Activated CD4-positive, alpha-beta memory T cell treated with anti-CD3 and anti-CD28 coated beads, Interleukin-2, amount 10 ng/mL, durations not matched to agents 7 days and 5 days (primary cell): ENCODE measurements at regions of chr3 and their contacts with region 1.

Region 1: GRCh38 chr3:184017672-184018423 is at the start of gene ABCC5:
- DNase-seq: peak; percentile 85
- H3K4me3 Mint-ChIP-seq: peak within 1 kb of the TSS; percentile 99
- H3K27ac Mint-ChIP-seq: peak within 1 kb of the TSS; percentile 83
- H3K4me1 Mint-ChIP-seq: peaks cover 45% of the 10 kb centered on the region
- H3K27me3 Mint-ChIP-seq: peaks cover 15% of the 10 kb centered on the region
- total RNA-seq, gene ABCC5: 24.1 to 25.3 TPM

Region 2: GRCh38 chr3:183895296-183895695 is 122.6 kb before region 1 on chr3:
- CTCF ChIA-PET with region 1: interaction called, 17 read pairs
- POLR2A ChIA-PET with region 1: no interaction called
- DNase-seq: peak; percentile 40
- H3K4me3 Mint-ChIP-seq: no peak overlapping the region
- H3K27ac Mint-ChIP-seq: no peak overlapping the region
- H3K4me1 Mint-ChIP-seq: peaks cover 3% of the 10 kb centered on the region
- H3K27me3 Mint-ChIP-seq: peaks cover 12% of the 10 kb centered on the region

Region 3: DNA sequence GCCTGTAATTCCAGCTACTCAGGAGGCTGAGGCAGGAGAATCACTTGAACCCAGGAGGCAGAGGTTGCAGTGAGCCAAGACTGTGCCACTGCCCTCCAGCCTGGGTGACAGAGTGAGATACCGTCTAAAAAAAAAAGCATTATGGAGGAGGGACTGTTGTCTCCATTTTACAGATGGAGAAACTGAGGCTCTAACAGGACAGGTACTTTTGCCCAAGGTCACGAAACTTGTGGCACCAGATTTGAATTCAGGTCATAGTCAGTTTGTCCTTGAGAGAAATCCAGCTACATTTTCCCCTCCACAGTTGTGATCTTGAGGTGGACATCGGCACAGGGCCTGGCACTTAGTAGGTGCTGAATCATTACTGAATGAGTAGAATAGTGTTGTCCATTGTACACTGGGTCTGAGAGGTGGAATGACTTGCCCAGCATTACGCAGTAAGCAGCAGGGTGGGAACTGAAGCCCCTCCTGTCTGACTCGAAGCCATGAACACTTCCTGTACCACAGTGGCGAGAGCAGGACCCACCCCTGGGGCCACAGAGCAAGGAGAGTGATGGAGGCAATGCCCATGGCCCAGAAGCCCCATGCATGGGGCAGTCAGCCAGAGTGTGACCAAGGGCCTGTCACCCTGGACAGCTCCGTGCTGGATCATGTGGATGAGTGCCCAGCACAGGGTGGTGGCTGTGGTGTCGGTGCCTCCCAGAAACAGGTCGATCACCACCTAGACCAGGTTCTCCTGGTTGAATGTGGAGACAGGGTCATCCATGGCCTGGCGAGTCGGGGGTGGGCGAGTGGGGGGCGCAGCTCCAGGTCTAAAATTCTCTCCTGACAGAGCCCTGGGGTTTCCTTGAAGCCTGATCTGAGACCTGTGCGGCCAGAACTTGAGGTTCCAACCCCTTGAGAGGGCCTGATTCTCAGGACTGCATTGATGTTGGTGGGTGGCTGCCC is 112.7 kb before region 1 on chr3:
- CTCF ChIA-PET with region 1: interaction called, 12 read pairs
- POLR2A ChIA-PET with region 1: no interaction called
- DNase-seq: no peak
- H3K4me3 Mint-ChIP-seq: no peak overlapping the region
- H3K27ac Mint-ChIP-seq: no peak overlapping the region
- H3K4me1 Mint-ChIP-seq: no peaks in the 10 kb centered on the region
- H3K27me3 Mint-ChIP-seq: peaks cover 11% of the 10 kb centered on the region

Region 4: DNA sequence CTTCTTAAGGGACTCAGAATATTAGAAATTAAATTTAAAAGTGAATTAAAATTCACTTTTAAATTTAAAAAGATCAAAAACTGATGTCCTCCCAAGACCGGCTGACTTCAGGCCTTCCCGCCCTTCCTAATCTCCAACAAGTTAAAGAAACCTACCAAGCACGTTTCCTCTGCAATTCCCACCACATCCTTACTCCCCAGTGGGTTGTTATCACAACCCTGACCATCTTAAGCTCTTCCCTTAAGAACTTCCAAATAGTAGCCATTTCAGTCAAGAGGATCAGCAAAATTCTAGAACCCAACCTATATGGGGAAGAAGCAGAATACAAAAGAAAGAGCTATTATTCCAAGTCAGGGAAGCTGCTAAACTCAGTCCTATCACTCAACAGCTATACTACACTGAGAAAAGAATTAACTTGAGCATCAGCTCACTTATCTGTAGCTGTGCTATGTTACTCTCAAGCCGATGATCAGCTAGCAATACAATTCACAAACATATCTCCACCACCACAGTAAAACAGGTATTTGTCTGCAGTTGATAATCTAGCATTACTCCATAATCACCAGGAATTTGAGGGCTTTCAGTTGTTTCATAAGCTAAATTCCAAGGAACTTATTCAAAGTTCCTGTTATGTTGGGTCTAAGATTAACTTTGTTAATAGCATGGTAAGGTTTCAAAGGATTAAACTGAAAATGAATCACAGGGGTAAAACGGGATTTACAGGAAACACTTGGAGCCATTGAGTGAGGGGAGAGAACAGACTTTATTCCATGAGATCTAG is 14.5 kb before region 1 on chr3:
- CTCF ChIA-PET with region 1: interaction called, 20 read pairs
- POLR2A ChIA-PET with region 1: no interaction called
- DNase-seq: no peak
- H3K4me3 Mint-ChIP-seq: no peak overlapping the region
- H3K27ac Mint-ChIP-seq: no peak overlapping the region
- H3K4me1 Mint-ChIP-seq: peaks cover 4% of the 10 kb centered on the region
- H3K27me3 Mint-ChIP-seq: no peaks in the 10 kb centered on the region

Region 5: GRCh38 chr3:184275961-184276910 is 258.4 kb after region 1 on chr3 and contains the start of gene ECE2:
- CTCF ChIA-PET with region 1: no interaction called
- POLR2A ChIA-PET with region 1: no interaction called
- DNase-seq: no peak
- H3K4me3 Mint-ChIP-seq: no peak within 1 kb of the TSS
- H3K27ac Mint-ChIP-seq: no peak within 1 kb of the TSS
- H3K4me1 Mint-ChIP-seq: no peaks in the 10 kb centered on the region
- H3K27me3 Mint-ChIP-seq: peaks cover 47% of the 10 kb centered on the region
- total RNA-seq, gene ECE2: not detected

Region 6: GRCh38 chr3:184428561-184429175 is 410.8 kb after region 1 on chr3:
- CTCF ChIA-PET with region 1: no interaction called
- POLR2A ChIA-PET with region 1: no interaction called
- DNase-seq: no peak
- H3K4me3 Mint-ChIP-seq: no peak overlapping the region
- H3K27ac Mint-ChIP-seq: no peak overlapping the region
- H3K4me1 Mint-ChIP-seq: no peaks in the 10 kb centered on the region
- H3K27me3 Mint-ChIP-seq: peaks cover 11% of the 10 kb centered on the region